ENCODE measurements at regions of chr20 and their contacts with region 1.

Region 1: GRCh38 chr20:48921151-48921898 is at the start of gene ARFGEF2:
- DNase-seq: peak; percentile 92
- ATAC-seq: peak; percentile 68
- H3K4me3 ChIP-seq: peak within 1 kb of the TSS; percentile 86 to 95 (median 91)
- H3K27ac ChIP-seq: peak within 1 kb of the TSS; percentile 91
- H3K4me1 ChIP-seq: peaks cover 54% of the 10 kb centered on the region
- H3K27me3 ChIP-seq: peaks cover 0 to 5% of the 10 kb centered on the region in 2 experiments; a peak in 1 of 5 replicates
- CTCF ChIP-seq: peak; percentile 54
- EP300 ChIP-seq: peak; percentile 26 to 90; a peak in 2 of 4 replicates
- POLR2A ChIP-seq: peak; percentile 84 to 88; a peak in 3 of 4 replicates
- RAD21 ChIP-seq: peak; percentile 91
- total RNA-seq, gene ARFGEF2: 60.8 and 89.4 TPM in 2 replicates

Region 2: DNA sequence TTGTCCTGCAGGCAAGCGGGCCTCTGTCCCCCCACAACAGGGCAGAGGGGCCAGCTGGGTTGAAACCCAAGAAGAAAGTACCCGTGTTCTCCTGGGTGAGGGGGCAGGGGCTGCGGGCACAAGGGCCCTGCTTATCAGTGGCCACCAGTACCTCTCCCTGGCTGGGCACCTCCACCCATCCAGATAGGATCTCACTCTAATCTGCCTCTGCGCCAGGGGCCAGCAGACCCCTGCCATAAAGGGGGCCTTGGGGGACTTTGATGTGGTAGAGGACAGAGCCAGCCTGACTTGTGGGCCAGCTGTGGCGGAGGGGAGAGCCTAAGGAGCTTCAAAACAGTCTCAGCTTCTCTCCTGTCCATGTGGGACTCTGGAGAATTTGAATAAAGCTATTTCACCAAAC is 121.6 kb before region 1 on chr20:
- CTCF ChIA-PET with region 1: no interaction called
- POLR2A ChIA-PET with region 1: no interaction called
- in situ Hi-C with region 1: no loop called
- intact Hi-C with region 1: no loop called
- DNase-seq: no peak
- ATAC-seq: no peak
- H3K4me3 ChIP-seq: no peak overlapping the region
- H3K27ac ChIP-seq: no peak overlapping the region
- H3K4me1 ChIP-seq: no peaks in the 10 kb centered on the region
- H3K27me3 ChIP-seq: peaks cover 11 to 64% of the 10 kb centered on the region in 2 experiments
- CTCF ChIP-seq: no peak
- EP300 ChIP-seq: no peak
- POLR2A ChIP-seq: no peak
- RAD21 ChIP-seq: no peak

Region 3: DNA sequence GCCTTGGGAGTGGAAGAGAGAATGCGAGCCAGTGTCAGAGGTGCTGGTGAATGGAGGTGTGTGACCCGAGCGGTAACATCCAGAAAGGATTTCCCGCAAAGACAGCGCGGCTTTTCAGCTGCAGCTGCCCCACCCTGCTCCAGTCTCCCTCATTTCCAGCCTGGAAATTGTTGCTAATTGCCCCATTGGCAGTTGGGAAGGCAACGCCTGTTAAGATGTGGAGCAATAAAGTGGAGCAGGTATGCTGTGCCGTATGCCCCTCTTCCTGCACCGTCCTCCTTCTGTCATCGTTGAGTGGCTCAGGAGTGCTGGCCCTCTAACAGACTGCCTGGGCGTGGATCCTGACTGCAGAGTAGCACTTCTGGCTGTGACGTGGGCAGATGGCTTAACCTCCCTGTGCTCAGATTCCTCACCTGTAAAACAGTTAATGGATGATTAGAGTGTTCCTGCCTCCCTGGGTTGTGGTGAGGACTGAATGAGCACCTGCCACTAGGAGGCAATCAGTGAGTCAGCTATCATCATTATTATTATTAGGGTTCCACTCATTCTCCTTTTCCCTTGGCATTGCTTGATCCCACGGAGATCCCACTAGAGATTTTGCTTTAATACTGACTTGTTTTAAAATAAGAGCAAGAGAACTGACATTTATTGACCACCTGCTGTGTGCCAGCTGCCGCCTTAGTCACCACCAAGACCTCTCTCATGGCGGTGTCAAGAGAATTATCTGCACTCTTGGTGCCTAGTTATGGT is 11.9 kb after region 1 on chr20:
- CTCF ChIA-PET with region 1: no interaction called
- POLR2A ChIA-PET with region 1: interaction called, 30 read pairs
- in situ Hi-C with region 1: no loop called
- intact Hi-C with region 1: no loop called
- DNase-seq: no peak
- ATAC-seq: peak; percentile 9
- H3K4me3 ChIP-seq: no peak overlapping the region
- H3K27ac ChIP-seq: peak overlapping the region; percentile 39
- H3K4me1 ChIP-seq: peaks cover 79% of the 10 kb centered on the region
- H3K27me3 ChIP-seq: no peaks in the 10 kb centered on the region
- CTCF ChIP-seq: no peak
- EP300 ChIP-seq: no peak
- POLR2A ChIP-seq: 0 out of 4 replicates have a peak, but pooled peaks of 1 of the 2 experiments have one; percentile 20
- RAD21 ChIP-seq: no peak

Region 4: GRCh38 chr20:49046087-49046900 is 125.0 kb after region 1 on chr20 and contains the start of gene CSE1L:
- CTCF ChIA-PET with region 1: no interaction called
- POLR2A ChIA-PET with region 1: interaction called, 6 read pairs
- in situ Hi-C with region 1: no loop called
- intact Hi-C with region 1: loop called (anchors 5 kb)
- DNase-seq: peak; percentile 97
- ATAC-seq: peak; percentile 97
- H3K4me3 ChIP-seq: peak within 1 kb of the TSS; percentile 84 to 99 (median 87)
- H3K27ac ChIP-seq: peak within 1 kb of the TSS; percentile 89
- H3K4me1 ChIP-seq: peaks cover 50% of the 10 kb centered on the region
- H3K27me3 ChIP-seq: no peaks in the 10 kb centered on the region; a peak in 2 of 5 replicates
- CTCF ChIP-seq: no peak
- EP300 ChIP-seq: peak in 1 of 2 experiments; percentile 20; a peak in 2 of 4 replicates
- POLR2A ChIP-seq: peak; percentile 93 to 96
- RAD21 ChIP-seq: peak; percentile 56
- total RNA-seq, gene CSE1L: 258 and 449 TPM in 2 replicates